ENCODE measurements at regions of chr10 and their contacts with region 1.

Region 1: DNA sequence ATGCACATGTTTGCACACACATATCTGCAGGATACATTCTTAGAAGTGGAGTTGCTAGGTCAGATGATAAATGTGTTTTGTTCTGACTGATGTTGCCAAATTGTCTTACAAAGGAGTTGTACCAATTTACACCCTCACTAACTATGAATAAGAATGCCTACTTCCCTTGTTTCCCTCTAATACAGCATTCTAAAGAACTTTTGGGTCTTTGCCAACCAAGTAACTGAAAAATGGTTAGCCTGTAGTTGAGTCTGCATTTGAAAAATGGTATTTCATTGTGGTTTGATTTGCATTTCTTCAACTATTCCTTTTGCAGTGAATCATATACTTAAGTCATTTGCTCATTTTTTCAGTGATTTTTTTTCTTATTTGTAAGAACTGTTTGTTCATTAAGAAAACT is 48.4 kb downstream of the TMEM26 start:
- DNase-seq: no peak
- H3K4me3 ChIP-seq: no peak overlapping the region
- H3K27ac ChIP-seq: no peak overlapping the region
- H3K4me1 ChIP-seq: no peaks in the 10 kb centered on the region
- H3K27me3 ChIP-seq: peaks cover 2% of the 10 kb centered on the region
- CTCF ChIP-seq: no peak

Region 2: GRCh38 chr10:61356342-61356741 is 48.4 kb before region 1 on chr10:
- CTCF ChIA-PET with region 1: no interaction called
- dilution Hi-C with region 1: loop called (anchors 5 kb)
- in situ Hi-C with region 1: no loop called
- intact Hi-C with region 1: no loop called
- DNase-seq: no peak
- H3K4me3 ChIP-seq: no peak overlapping the region
- H3K27ac ChIP-seq: no peak overlapping the region
- H3K4me1 ChIP-seq: no peaks in the 10 kb centered on the region
- H3K27me3 ChIP-seq: no peaks in the 10 kb centered on the region
- CTCF ChIP-seq: no peak

Region 3: GRCh38 chr10:61592581-61592980 is 187.8 kb after region 1 on chr10:
- CTCF ChIA-PET with region 1: no interaction called
- dilution Hi-C with region 1: no loop called
- in situ Hi-C with region 1: no loop called
- intact Hi-C with region 1: no loop called
- DNase-seq: peak; percentile 6
- H3K4me3 ChIP-seq: no peak overlapping the region
- H3K27ac ChIP-seq: no peak overlapping the region
- H3K4me1 ChIP-seq: no peaks in the 10 kb centered on the region
- H3K27me3 ChIP-seq: no peaks in the 10 kb centered on the region
- CTCF ChIP-seq: peak; percentile 47 to 53